ENCODE measurements at regions of chr1 and their contacts with region 1.

Region 1: DNA sequence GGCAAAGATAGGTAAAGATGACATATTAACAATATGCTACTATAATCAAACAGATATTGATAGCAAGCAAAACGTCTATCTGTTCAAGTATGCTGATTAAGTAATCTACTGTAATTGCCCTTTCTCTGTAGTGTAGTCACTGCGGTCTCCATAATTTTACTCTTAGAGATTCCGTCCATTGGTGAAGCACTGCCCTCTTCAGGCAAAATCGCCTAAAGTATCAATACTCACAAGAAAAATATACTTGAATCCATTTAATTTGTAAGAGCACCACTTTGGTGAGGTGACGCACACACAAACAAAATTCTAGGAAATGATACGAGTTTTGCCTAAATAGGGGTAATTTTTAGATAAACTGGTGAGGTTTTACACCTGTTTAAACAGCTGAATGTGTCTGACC is 434.6 kb upstream of the CHRM3 start:
- DNase-seq: peak in 1 of 2 experiments; percentile 29
- H3K4me3 ChIP-seq: no peak overlapping the region
- H3K4me3 Mint-ChIP-seq: no peak overlapping the region
- H3K27ac Mint-ChIP-seq: no peak overlapping the region
- H3K4me1 ChIP-seq: no peaks in the 10 kb centered on the region
- H3K4me1 Mint-ChIP-seq: no peaks in the 10 kb centered on the region
- H3K27me3 ChIP-seq: no peaks in the 10 kb centered on the region
- H3K27me3 Mint-ChIP-seq: peaks cover 2% of the 10 kb centered on the region
- CTCF ChIP-seq: peak; percentile 21 to 50

Region 2: GRCh38 chr1:237809099-237809498 is 1142.7 kb before region 1 on chr1:
- CTCF ChIA-PET with region 1: no interaction called
- POLR2A ChIA-PET with region 1: no interaction called
- intact Hi-C with region 1: loop called (anchors 5 kb)
- DNase-seq: no peak
- H3K4me3 ChIP-seq: no peak overlapping the region
- H3K4me3 Mint-ChIP-seq: no peak overlapping the region
- H3K27ac Mint-ChIP-seq: no peak overlapping the region
- H3K4me1 ChIP-seq: no peaks in the 10 kb centered on the region
- H3K4me1 Mint-ChIP-seq: no peaks in the 10 kb centered on the region
- H3K27me3 ChIP-seq: no peaks in the 10 kb centered on the region
- H3K27me3 Mint-ChIP-seq: no peaks in the 10 kb centered on the region
- CTCF ChIP-seq: no peak

Region 3: GRCh38 chr1:237864338-237865244 is 1087.2 kb before region 1 on chr1:
- CTCF ChIA-PET with region 1: no interaction called
- POLR2A ChIA-PET with region 1: no interaction called
- intact Hi-C with region 1: loop called (anchors 5 kb)
- DNase-seq: peak; percentile 44 to 58
- H3K4me3 ChIP-seq: no peak overlapping the region
- H3K4me3 Mint-ChIP-seq: no peak overlapping the region
- H3K27ac Mint-ChIP-seq: peak overlapping the region; percentile 7
- H3K4me1 ChIP-seq: no peaks in the 10 kb centered on the region
- H3K4me1 Mint-ChIP-seq: no peaks in the 10 kb centered on the region
- H3K27me3 ChIP-seq: no peaks in the 10 kb centered on the region
- H3K27me3 Mint-ChIP-seq: no peaks in the 10 kb centered on the region
- CTCF ChIP-seq: peak; percentile 78 to 83

Region 4: DNA sequence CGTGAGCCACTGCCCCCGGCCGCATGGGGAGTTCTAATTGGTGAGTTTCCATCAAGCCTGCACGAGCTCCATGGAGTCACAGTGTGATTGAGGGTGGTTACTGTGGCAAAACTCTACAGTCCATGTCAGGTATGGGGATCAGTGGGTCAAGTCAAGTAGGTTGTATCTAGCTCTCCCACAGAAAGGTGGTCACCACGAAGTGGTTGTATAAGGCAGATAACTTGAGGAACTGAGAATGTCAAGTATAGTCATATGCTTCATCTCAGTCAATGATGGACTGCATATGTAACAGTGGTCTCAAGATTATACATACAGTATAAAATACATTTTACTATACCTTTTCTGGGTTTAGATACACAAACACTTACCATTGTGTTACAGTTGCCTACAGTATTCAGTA is 712.5 kb before region 1 on chr1:
- CTCF ChIA-PET with region 1: no interaction called
- POLR2A ChIA-PET with region 1: no interaction called
- intact Hi-C with region 1: loop called (anchors 5 kb)
- DNase-seq: no peak
- H3K4me3 ChIP-seq: no peak overlapping the region
- H3K4me3 Mint-ChIP-seq: no peak overlapping the region
- H3K27ac Mint-ChIP-seq: no peak overlapping the region
- H3K4me1 ChIP-seq: no peaks in the 10 kb centered on the region
- H3K4me1 Mint-ChIP-seq: no peaks in the 10 kb centered on the region
- H3K27me3 ChIP-seq: no peaks in the 10 kb centered on the region
- H3K27me3 Mint-ChIP-seq: no peaks in the 10 kb centered on the region
- CTCF ChIP-seq: no peak

Region 5: GRCh38 chr1:238252033-238252802 is 699.6 kb before region 1 on chr1:
- CTCF ChIA-PET with region 1: no interaction called
- POLR2A ChIA-PET with region 1: no interaction called
- intact Hi-C with region 1: loop called (anchors 1 kb)
- DNase-seq: peak; percentile 45 to 48
- H3K4me3 ChIP-seq: no peak overlapping the region
- H3K4me3 Mint-ChIP-seq: no peak overlapping the region
- H3K27ac Mint-ChIP-seq: no peak overlapping the region
- H3K4me1 ChIP-seq: no peaks in the 10 kb centered on the region
- H3K4me1 Mint-ChIP-seq: no peaks in the 10 kb centered on the region
- H3K27me3 ChIP-seq: no peaks in the 10 kb centered on the region
- H3K27me3 Mint-ChIP-seq: peaks cover 5% of the 10 kb centered on the region
- CTCF ChIP-seq: peak; percentile 49

Region 6: DNA sequence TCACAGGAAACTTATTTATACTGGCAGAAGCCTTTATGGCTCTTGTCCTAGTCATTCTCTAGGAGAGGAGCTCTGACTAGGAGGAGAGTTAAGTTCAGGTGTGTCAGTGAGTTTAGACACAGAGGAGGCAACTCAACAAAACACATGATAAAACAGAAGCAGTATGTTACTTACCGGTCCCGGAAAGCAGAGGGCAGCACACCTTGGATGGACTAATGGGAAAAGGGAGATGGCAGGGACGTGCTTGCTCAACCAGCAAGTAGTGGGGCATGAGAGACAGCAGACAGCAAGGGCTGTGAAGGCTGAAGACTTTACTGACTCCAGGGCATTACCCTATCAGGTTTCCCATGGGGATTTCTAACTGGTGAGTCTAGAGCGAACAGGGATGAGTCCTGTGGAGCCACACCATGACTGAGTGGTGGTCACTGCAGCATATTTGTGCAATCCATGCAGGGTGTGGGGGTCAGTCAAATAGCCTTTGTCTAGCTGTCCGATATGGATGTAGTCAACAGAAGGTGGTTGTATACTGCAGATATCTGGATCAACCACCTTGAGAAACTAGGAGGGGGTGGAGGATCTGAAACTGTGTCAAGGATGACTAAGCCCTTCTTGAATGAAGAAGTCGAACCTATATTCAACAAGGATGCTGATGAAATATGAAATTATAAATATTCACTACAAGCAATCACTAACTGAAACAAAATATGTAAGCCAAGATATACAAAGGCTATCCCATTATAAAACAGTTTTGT is 161.7 kb before region 1 on chr1:
- CTCF ChIA-PET with region 1: no interaction called
- POLR2A ChIA-PET with region 1: no interaction called
- intact Hi-C with region 1: loop called (anchors 1 kb)
- DNase-seq: no peak
- H3K4me3 ChIP-seq: no peak overlapping the region
- H3K4me3 Mint-ChIP-seq: no peak overlapping the region
- H3K27ac Mint-ChIP-seq: no peak overlapping the region
- H3K4me1 ChIP-seq: no peaks in the 10 kb centered on the region
- H3K4me1 Mint-ChIP-seq: no peaks in the 10 kb centered on the region
- H3K27me3 ChIP-seq: no peaks in the 10 kb centered on the region
- H3K27me3 Mint-ChIP-seq: peaks cover 6% of the 10 kb centered on the region
- CTCF ChIP-seq: no peak